ENCODE measurements at regions of chr2 and their contacts with region 1.

Region 1: DNA sequence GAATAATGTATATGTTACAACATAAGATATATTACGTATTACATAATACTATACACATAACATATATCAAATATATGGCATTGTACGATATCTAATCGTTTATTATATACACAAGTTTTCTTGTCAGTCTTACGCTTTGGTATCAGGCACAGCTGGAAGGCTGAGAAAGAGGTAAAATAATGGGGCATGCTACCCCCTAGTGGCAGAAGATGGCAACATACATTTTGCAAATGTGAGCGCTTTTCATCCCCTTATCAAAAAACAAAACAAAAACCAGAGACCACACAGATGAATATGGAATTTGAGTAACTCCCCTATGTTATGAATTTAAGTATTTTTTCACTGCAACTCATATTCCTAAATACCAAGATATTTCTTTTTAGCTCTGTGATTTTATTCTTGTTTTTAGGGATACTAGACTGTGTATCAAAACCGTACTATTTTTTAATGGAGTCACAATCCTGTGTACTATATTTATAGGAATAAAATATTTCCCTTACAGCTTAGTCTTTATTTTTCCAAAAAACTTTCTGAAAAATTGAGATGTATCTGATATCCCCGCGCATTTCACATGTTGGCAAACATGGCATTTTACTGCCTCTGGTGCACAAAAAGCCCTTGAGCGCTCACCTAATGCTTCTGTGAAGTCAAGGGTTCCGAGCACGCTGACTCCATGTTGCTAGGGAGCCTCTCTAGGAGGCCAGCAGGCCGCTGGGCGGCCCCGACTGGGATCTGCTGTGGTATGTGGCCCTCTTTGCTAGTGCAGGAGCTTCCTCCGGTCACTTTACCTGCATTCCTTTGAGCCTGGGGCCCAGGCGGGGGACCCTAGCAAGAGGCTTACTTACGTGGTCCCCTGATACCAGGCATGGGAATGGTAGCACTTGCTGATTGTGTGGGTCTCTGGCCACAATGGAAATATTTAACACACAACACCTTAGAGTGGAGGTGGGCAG is 62.5 kb downstream of the SLC4A3 start:
- DNase-seq: no peak
- H3K4me3 ChIP-seq: no peak overlapping the region
- H3K27me3 ChIP-seq: no peaks in the 10 kb centered on the region
- CTCF ChIP-seq: peak; percentile 74

Region 2: DNA sequence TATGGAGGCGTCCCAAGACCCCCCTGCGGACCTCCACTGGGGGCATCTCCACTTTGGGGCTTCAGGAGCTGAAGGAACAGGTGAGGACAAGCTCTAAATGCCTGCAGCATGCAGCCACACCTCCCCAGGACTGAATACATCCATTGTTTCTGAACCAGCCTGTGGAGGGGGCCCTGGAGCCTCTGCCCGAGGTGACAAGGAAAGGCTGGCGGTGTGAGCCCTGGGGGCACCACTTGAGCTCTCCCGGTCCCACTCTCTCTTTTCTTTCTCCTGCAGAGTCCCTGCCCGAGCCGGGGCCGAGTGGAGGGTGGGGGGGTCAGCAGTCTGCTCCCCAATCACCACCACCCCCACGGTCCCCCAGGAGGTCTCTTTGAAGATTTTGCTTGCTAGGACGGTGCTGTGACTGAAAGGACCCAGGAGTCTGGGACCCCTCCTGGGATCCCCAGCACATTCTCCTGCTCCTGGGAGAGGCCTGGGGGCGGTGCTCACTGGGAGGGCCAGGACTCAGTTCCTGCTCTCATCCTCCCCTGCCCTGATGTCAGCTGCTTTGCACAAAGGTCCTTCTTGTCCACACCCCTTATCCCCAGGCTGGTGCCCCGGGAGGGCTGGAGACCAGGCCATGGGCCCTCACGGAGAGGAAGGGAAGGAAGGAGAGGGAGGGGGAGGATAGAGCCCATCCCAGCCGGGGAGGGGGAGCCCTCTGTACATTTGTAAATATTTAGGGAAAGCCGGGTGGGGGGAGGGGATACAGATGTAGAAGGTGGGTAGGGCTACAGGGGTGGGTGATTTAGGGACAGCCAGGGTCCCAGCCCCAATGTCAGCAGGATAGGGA is 152.1 kb before region 1 on chr2:
- CTCF ChIA-PET with region 1: interaction called, 43 read pairs
- POLR2A ChIA-PET with region 1: interaction called, 3 read pairs
- DNase-seq: no peak
- H3K4me3 ChIP-seq: no peak overlapping the region
- H3K27me3 ChIP-seq: no peaks in the 10 kb centered on the region
- CTCF ChIP-seq: no peak; the same call in 1 of the 2 replicates

Region 3: DNA sequence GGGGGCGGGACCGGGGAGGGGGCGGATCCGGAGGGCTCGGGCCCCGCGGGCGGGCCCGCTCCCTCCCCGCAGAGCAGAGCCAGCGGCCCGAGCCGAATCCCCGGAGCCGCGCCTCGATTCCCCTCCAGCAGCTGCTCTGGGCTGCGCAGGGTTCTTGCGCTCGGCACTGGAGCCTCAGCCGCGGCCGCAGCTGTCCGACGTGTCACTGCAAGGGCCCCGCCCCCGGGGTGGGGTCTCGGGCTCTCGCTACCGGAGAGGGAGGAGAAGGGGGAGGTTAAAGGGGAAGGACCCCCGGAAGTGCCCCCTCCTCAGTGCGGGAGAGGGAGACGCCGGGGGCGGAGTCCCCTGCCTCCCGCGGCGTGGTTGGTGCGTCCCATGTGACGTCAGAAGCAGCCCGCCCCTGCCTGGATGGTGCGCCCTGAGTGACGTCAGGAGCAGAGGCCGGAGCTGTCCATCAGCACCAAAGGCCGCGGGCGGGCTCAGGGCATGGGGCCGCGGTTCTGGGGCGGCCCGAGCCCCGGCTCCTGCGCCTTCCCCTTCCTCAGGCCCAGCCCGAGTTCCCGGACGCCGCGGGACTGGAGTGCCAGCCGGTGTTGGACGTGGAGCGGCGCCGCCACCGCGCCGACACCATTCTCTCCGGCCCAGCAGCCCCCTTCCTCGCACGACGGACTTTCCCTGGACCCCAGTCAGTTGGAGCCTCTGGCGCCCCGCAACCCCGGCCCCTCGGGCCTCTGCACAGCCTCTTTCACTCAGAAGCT is 146.2 kb before region 1 on chr2 and contains the starts of genes CHPF and TMEM198:
- CTCF ChIA-PET with region 1: interaction called, 43 read pairs
- POLR2A ChIA-PET with region 1: interaction called, 3 read pairs
- DNase-seq: peak; percentile 86
- H3K4me3 ChIP-seq: peak within 1 kb of the TSS; percentile 84
- H3K27me3 ChIP-seq: no peaks in the 10 kb centered on the region
- CTCF ChIP-seq: no peak
- polyA plus RNA-seq, gene CHPF: 65.0 and 119 TPM in 2 replicates
- polyA plus RNA-seq, gene TMEM198: 2.5 and 4.0 TPM in 2 replicates

Region 4: GRCh38 chr2:219560037-219560892 is 129.7 kb before region 1 on chr2:
- CTCF ChIA-PET with region 1: interaction called, 10 read pairs
- POLR2A ChIA-PET with region 1: no interaction called
- DNase-seq: no peak
- H3K4me3 ChIP-seq: no peak overlapping the region
- H3K27me3 ChIP-seq: no peaks in the 10 kb centered on the region
- CTCF ChIP-seq: peak; percentile 80

Region 5: GRCh38 chr2:219571311-219572236 is 118.4 kb before region 1 on chr2 and contains the start of gene OBSL1:
- CTCF ChIA-PET with region 1: interaction called, 11 read pairs
- POLR2A ChIA-PET with region 1: no interaction called
- DNase-seq: no peak
- H3K4me3 ChIP-seq: peak within 1 kb of the TSS; percentile 76
- H3K27me3 ChIP-seq: peaks cover 5% of the 10 kb centered on the region
- CTCF ChIP-seq: no peak
- polyA plus RNA-seq, gene OBSL1: 47.2 and 75.9 TPM in 2 replicates

Region 6: GRCh38 chr2:219671279-219671678 is 18.7 kb before region 1 on chr2:
- CTCF ChIA-PET with region 1: interaction called, 10 read pairs
- POLR2A ChIA-PET with region 1: no interaction called
- DNase-seq: no peak
- H3K4me3 ChIP-seq: no peak overlapping the region
- H3K27me3 ChIP-seq: peaks cover 4% of the 10 kb centered on the region
- CTCF ChIP-seq: no peak

Region 7: GRCh38 chr2:219701847-219702634 is 12.1 kb after region 1 on chr2:
- CTCF ChIA-PET with region 1: interaction called, 43 read pairs
- POLR2A ChIA-PET with region 1: no interaction called
- DNase-seq: no peak
- H3K4me3 ChIP-seq: no peak overlapping the region
- H3K27me3 ChIP-seq: no peaks in the 10 kb centered on the region
- CTCF ChIP-seq: no peak

Measured in BJ (cell line).